CD4-positive, alpha-beta memory T cell (primary cell): ENCODE measurements at regions of chr10 and their contacts with region 1.

Region 1: DNA sequence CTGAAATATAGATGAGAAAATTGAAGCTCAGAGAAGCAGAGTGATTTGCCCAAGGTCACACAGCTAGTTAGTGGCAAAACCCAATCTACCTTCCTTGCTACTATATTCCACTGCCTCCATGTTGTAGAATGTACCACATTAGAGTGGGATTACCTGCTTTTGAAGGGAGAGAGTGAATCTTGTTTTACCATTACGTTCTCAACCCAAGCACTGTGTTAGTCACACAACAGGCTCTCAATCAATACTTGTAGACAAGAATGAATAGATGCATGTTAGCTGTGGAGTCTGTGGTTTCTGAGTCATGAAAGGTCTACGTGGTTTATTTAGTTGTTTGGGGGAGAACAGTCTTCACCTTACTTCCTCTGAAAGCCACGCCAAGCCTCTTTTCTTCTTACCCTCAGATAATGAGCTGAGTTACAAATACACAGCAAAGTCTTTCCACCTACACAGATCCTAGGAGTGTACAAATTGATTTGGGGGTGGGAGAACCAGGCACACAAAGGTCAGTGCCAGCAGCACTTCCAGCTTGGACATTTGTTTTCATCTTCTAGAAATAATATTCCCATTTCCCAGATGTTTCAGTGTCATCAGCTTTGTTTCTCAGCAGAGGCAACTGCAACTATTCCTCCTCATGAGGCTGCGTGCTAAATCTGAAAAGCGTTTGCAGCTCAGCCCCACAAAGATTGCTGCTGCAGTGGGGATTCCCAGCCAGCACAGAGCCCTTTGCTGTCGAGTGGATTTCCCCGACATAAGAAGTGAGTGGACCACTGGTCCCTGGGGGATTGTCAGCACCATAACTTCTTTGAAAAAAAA is 71.5 kb upstream of the ADO start:
- DNase-seq: peak; percentile 76 to 87 (median 81)
- H3K4me3 ChIP-seq: no peak overlapping the region
- H3K4me3 Mint-ChIP-seq: peak overlapping the region in 5 of 8 donors; percentile 26 to 75 (median 42)
- H3K27ac ChIP-seq: peak overlapping the region; percentile 60
- H3K27ac Mint-ChIP-seq: peak overlapping the region in 2 of 7 donors; percentile 65 to 92
- H3K4me1 ChIP-seq: peaks cover 59% of the 10 kb centered on the region
- H3K4me1 Mint-ChIP-seq: peaks cover 5 to 15% (median 13%) of the 10 kb centered on the region in 4 donors
- H3K27me3 ChIP-seq: no peaks in the 10 kb centered on the region
- H3K27me3 Mint-ChIP-seq: peaks cover 0 to under 1% of the 10 kb centered on the region in 2 donors

Region 2: GRCh38 chr10:62610649-62611229 is 122.3 kb before region 1 on chr10:
- CTCF ChIA-PET with region 1: interaction called, 16 read pairs
- POLR2A ChIA-PET with region 1: no interaction called
- intact Hi-C with region 1: no loop called
- DNase-seq: peak; percentile 76 to 80 (median 78)
- H3K4me3 ChIP-seq: no peak overlapping the region
- H3K4me3 Mint-ChIP-seq: no peak overlapping the region
- H3K27ac ChIP-seq: no peak overlapping the region
- H3K27ac Mint-ChIP-seq: peak overlapping the region in 2 of 7 donors; percentile 46 to 78
- H3K4me1 ChIP-seq: peaks cover 4% of the 10 kb centered on the region
- H3K4me1 Mint-ChIP-seq: peaks cover 3 to 9% (median 4%) of the 10 kb centered on the region in 4 donors
- H3K27me3 ChIP-seq: no peaks in the 10 kb centered on the region
- H3K27me3 Mint-ChIP-seq: peaks cover 4 to 8% of the 10 kb centered on the region in 2 donors

Region 3: GRCh38 chr10:62647375-62648092 is 85.5 kb before region 1 on chr10:
- CTCF ChIA-PET with region 1: no interaction called
- POLR2A ChIA-PET with region 1: no interaction called
- intact Hi-C with region 1: no loop called
- DNase-seq: no peak
- H3K4me3 ChIP-seq: no peak overlapping the region
- H3K4me3 Mint-ChIP-seq: peak overlapping the region in 2 of 8 donors; percentile 1 to 23
- H3K27ac ChIP-seq: no peak overlapping the region
- H3K27ac Mint-ChIP-seq: peak overlapping the region in 1 of 7 donors; percentile 2
- H3K4me1 ChIP-seq: peaks cover 10% of the 10 kb centered on the region
- H3K4me1 Mint-ChIP-seq: peaks cover 5 to 15% (median 9%) of the 10 kb centered on the region in 4 donors
- H3K27me3 ChIP-seq: no peaks in the 10 kb centered on the region
- H3K27me3 Mint-ChIP-seq: no peaks in the 10 kb centered on the region

Region 4: GRCh38 chr10:62689712-62690111 is 43.3 kb before region 1 on chr10:
- CTCF ChIA-PET with region 1: no interaction called
- POLR2A ChIA-PET with region 1: interaction called, 16 read pairs
- intact Hi-C with region 1: loop called (anchors 5 kb)
- DNase-seq: peak in 4 of 5 donors; percentile 35 to 54 (median 49)
- H3K4me3 ChIP-seq: peak overlapping the region in 1 of 2 donors; percentile 15
- H3K4me3 Mint-ChIP-seq: peak overlapping the region; percentile 68 to 88 (median 80)
- H3K27ac ChIP-seq: peak overlapping the region; percentile 55
- H3K27ac Mint-ChIP-seq: peak overlapping the region; percentile 75 to 95 (median 90)
- H3K4me1 ChIP-seq: peaks cover 43% of the 10 kb centered on the region
- H3K4me1 Mint-ChIP-seq: peaks cover 35 to 65% (median 52%) of the 10 kb centered on the region in 4 donors
- H3K27me3 ChIP-seq: no peaks in the 10 kb centered on the region
- H3K27me3 Mint-ChIP-seq: no peaks in the 10 kb centered on the region

Region 5: DNA sequence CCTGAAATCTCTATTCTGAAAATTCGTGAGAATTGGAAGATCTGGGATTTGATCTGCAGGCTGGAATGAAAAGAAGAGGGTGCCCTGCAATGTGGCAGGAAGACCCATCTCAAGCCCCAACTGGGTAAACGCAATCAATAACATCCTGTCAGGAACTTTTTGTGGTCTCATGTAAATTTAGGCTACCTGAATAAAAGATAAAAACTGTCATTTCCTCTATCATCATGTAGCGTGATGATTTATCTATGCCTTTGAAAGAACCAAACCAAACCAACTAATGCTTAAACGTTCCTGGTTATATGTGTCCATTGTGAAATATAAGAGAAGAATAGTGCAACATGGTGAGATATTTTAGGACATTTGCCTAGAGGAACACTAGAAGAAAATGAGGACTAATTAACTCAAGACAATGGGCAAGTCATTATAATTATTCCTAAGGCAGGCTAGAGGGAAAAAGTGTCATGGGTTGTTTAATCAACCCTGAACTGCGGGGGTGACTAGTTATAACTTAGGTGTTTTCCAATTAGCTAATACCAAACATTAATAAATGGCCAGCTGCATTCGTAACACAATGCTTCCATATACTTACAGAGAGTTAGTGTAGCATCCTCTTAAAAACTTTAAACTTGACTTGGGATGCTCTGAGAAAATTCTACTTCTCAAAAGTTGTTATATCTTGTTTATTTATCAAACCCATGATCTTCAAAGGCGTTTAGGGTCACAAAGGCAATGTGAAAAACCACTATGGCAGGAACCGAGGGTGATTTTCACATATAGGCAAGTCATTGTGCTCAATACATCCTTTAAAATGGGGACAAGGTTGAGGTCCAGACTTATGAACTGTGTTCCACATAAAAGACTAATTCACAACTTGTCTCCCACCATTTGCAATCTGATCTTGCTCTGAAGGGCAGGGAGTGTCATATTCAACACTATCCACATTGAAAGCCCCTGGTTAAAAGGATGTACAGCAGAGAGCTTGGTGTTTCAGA is 22.9 kb after region 1 on chr10:
- CTCF ChIA-PET with region 1: no interaction called
- POLR2A ChIA-PET with region 1: interaction called, 8 read pairs
- intact Hi-C with region 1: loop called (anchors 1 kb)
- DNase-seq: peak in 4 of 5 donors; percentile 27 to 44 (median 36)
- H3K4me3 ChIP-seq: no peak overlapping the region
- H3K4me3 Mint-ChIP-seq: peak overlapping the region; percentile 6 to 72 (median 52)
- H3K27ac ChIP-seq: no peak overlapping the region
- H3K27ac Mint-ChIP-seq: peak overlapping the region; percentile 10 to 88 (median 42)
- H3K4me1 ChIP-seq: peaks cover 22% of the 10 kb centered on the region
- H3K4me1 Mint-ChIP-seq: peaks cover 20 to 35% (median 23%) of the 10 kb centered on the region in 4 donors
- H3K27me3 ChIP-seq: no peaks in the 10 kb centered on the region
- H3K27me3 Mint-ChIP-seq: no peaks in the 10 kb centered on the region

Region 6: DNA sequence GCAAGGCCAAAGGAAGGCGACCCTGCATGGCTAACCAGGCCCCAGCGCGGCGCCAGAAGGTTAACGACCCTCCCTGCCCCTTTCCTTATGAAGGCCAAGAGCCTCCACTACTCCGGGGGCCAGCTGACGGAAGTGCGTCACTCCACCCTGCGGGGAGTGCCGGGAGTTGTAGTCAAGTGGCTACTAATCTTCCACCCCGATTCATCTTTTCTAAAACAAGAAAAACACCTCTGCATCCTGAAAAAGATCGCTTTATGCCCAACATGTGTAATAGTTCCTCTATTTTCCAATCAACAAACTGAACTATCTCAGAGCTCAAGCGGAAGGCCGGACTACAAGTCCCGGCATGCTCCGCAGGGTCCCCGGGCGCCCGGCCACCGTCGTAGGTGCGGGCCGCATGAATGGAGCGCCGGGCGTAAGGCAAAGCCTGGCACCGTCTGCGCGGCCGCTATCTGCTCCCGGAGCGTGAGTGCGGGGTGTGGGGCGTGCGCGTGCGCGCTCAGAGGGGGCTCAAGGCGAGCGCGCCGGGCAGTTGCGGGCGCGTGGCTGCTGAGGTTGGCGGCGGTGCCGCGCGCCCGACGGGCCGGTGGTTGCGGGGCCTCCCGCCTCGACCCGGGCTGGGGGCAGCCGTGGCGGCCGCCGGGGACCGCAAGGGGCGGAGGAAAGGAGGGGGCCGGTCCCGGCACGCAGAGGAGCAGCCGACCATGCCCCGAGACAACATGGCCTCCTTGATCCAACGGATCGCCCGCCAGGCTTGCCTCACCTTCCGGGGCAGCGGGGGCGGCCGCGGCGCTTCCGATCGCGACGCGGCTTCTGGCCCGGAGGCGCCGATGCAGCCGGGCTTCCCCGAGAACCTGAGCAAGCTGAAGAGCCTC is 71.5 kb after region 1 on chr10 and contains the start of gene ADO:
- CTCF ChIA-PET with region 1: no interaction called
- POLR2A ChIA-PET with region 1: interaction called, 33 read pairs
- intact Hi-C with region 1: loop called (anchors 1 kb)
- DNase-seq: peak; percentile 80 to 86 (median 83)
- H3K4me3 ChIP-seq: peak within 1 kb of the TSS; percentile 60 to 88
- H3K4me3 Mint-ChIP-seq: peak within 1 kb of the TSS; percentile 91 to 99 (median 96)
- H3K27ac ChIP-seq: peak within 1 kb of the TSS; percentile 83
- H3K27ac Mint-ChIP-seq: peak within 1 kb of the TSS; percentile 96 to 100 (median 99)
- H3K4me1 ChIP-seq: peaks cover 35% of the 10 kb centered on the region
- H3K4me1 Mint-ChIP-seq: peaks cover 22 to 45% (median 33%) of the 10 kb centered on the region in 4 donors
- H3K27me3 ChIP-seq: no peaks in the 10 kb centered on the region
- H3K27me3 Mint-ChIP-seq: no peaks in the 10 kb centered on the region
- total RNA-seq, gene ADO: 18.6 to 19.1 TPM